Breast epithelium (tissue), 4 donors: ENCODE measurements at regions of chr15 and their contacts with region 1.

Region 1: DNA sequence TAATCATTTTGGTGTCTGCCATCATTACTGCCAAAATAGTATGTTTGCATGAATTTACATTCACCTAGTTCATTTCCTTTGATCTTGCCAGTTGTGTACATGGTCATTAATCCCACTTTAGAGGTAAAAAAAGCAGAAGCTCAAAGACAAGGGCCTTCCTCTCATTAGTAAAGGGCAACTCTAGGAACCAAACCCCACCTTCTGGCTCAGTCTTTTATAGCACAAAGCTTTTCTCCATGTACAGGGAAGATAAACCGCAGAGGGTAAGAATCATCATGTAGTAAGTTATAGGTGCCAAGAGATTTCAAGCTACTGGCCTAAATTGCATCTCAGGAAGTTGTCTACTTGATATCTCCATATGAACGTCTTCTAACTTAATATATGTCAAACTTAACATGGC is 19.3 kb upstream of the SPG21 start:
- DNase-seq: no peak
- H3K4me3 ChIP-seq: no peak overlapping the region
- H3K27ac ChIP-seq: no peak overlapping the region
- H3K4me1 ChIP-seq: no peaks in the 10 kb centered on the region
- H3K27me3 ChIP-seq: no peaks in the 10 kb centered on the region
- CTCF ChIP-seq: no peak
- POLR2A ChIP-seq: no peak

Region 2: GRCh38 chr15:65054333-65055200 is 45.6 kb after region 1 on chr15:
- intact Hi-C with region 1: no loop called
- DNase-seq: peak; percentile 52 to 79
- H3K4me3 ChIP-seq: no peak overlapping the region
- H3K27ac ChIP-seq: peak overlapping the region; percentile 21 to 70
- H3K4me1 ChIP-seq: no peaks in the 10 kb centered on the region
- H3K27me3 ChIP-seq: no peaks in the 10 kb centered on the region
- CTCF ChIP-seq: peak; percentile 65 to 93 (median 83)
- POLR2A ChIP-seq: no peak

Region 3: DNA sequence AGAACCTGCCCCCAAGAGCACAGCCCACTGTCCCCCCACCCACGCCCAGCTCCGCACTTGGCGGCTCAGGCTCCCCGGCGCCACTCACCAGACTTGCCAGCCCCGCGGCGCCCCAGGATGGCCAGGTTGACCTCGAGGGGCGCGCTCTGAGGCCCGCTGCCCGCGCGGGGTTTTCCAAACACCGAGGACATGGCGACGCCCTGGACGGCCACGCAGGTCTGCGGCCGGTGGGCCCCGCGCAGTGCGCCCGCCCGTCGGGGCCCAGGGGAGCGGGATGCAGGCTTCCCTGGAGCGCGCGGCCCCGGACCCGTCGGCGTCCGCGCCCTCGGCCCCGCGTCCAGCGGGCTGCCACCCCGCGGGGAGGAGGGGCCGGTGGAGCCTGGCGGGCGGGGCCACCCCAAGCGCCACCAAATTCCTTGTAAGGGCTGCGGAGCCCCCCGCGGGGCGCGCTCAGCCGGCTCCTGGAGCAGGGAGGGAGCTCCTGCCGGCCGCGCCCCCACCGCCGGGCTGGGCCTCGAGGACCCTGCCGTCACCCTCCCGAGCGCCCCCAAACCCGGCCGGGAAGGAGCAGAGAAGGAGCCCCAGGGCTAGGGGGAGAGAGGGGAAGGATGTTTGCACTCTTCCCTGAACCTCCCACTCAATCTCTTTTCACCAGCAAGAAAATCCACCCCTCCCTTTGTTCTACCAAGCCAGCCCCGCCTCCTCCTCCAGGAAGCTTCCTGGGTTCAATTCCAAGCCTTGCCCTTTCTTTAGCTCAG is 58.8 kb after region 1 on chr15 and contains the start of gene RASL12:
- intact Hi-C with region 1: loop called (anchors 2 kb)
- DNase-seq: no peak
- H3K4me3 ChIP-seq: peak within 1 kb of the TSS; percentile 47 to 86 (median 61)
- H3K27ac ChIP-seq: peak within 1 kb of the TSS; percentile 76 to 96
- H3K4me1 ChIP-seq: no peaks in the 10 kb centered on the region
- H3K27me3 ChIP-seq: no peaks in the 10 kb centered on the region
- CTCF ChIP-seq: no peak
- POLR2A ChIP-seq: no peak
- total RNA-seq, gene RASL12: 12.6 to 20.6 (median 20.3) TPM